B cell (primary cell): ENCODE measurements at regions of chr1 and their contacts with region 1.

Region 1: GRCh38 chr1:214328770-214329469 is 48.0 kb downstream of the SMYD2 start:
- DNase-seq: peak; percentile 78
- ATAC-seq: peak; percentile 87
- H3K4me3 ChIP-seq: no peak overlapping the region
- H3K4me3 Mint-ChIP-seq: no peak overlapping the region
- H3K27ac ChIP-seq: no peak overlapping the region
- H3K27ac Mint-ChIP-seq: peak overlapping the region; percentile 10
- H3K4me1 ChIP-seq: no peaks in the 10 kb centered on the region
- H3K4me1 Mint-ChIP-seq: peaks cover 16% of the 10 kb centered on the region
- H3K27me3 ChIP-seq: no peaks in the 10 kb centered on the region
- H3K27me3 Mint-ChIP-seq: no peaks in the 10 kb centered on the region
- CTCF ChIP-seq: peak; percentile 88

Region 2: GRCh38 chr1:213242883-213243282 is 1086.0 kb before region 1 on chr1:
- CTCF ChIA-PET with region 1: interaction called, 10 read pairs
- POLR2A ChIA-PET with region 1: no interaction called
- intact Hi-C with region 1: no loop called
- DNase-seq: no peak
- ATAC-seq: no peak
- H3K4me3 ChIP-seq: no peak overlapping the region
- H3K4me3 Mint-ChIP-seq: no peak overlapping the region
- H3K27ac ChIP-seq: no peak overlapping the region
- H3K27ac Mint-ChIP-seq: no peak overlapping the region
- H3K4me1 ChIP-seq: no peaks in the 10 kb centered on the region
- H3K4me1 Mint-ChIP-seq: no peaks in the 10 kb centered on the region
- H3K27me3 ChIP-seq: no peaks in the 10 kb centered on the region
- H3K27me3 Mint-ChIP-seq: no peaks in the 10 kb centered on the region
- CTCF ChIP-seq: no peak

Region 3: GRCh38 chr1:214271174-214271858 is 57.6 kb before region 1 on chr1:
- CTCF ChIA-PET with region 1: interaction called, 25 read pairs
- POLR2A ChIA-PET with region 1: no interaction called
- intact Hi-C with region 1: no loop called
- DNase-seq: no peak
- ATAC-seq: no peak
- H3K4me3 ChIP-seq: no peak overlapping the region
- H3K4me3 Mint-ChIP-seq: no peak overlapping the region
- H3K27ac ChIP-seq: no peak overlapping the region
- H3K27ac Mint-ChIP-seq: no peak overlapping the region
- H3K4me1 ChIP-seq: no peaks in the 10 kb centered on the region
- H3K4me1 Mint-ChIP-seq: no peaks in the 10 kb centered on the region
- H3K27me3 ChIP-seq: peaks cover 0 to 4% (median 0%) of the 10 kb centered on the region in 4 experiments
- H3K27me3 Mint-ChIP-seq: peaks cover 19% of the 10 kb centered on the region
- CTCF ChIP-seq: no peak

Region 4: GRCh38 chr1:214316593-214316992 is 12.3 kb before region 1 on chr1:
- CTCF ChIA-PET with region 1: interaction called, 48 read pairs
- POLR2A ChIA-PET with region 1: no interaction called
- intact Hi-C with region 1: no loop called
- DNase-seq: no peak
- ATAC-seq: no peak
- H3K4me3 ChIP-seq: no peak overlapping the region
- H3K4me3 Mint-ChIP-seq: no peak overlapping the region
- H3K27ac ChIP-seq: no peak overlapping the region
- H3K27ac Mint-ChIP-seq: no peak overlapping the region
- H3K4me1 ChIP-seq: no peaks in the 10 kb centered on the region
- H3K4me1 Mint-ChIP-seq: peaks cover 3% of the 10 kb centered on the region
- H3K27me3 ChIP-seq: no peaks in the 10 kb centered on the region
- H3K27me3 Mint-ChIP-seq: no peaks in the 10 kb centered on the region
- CTCF ChIP-seq: no peak

Region 5: GRCh38 chr1:214362188-214362882 is 33.4 kb after region 1 on chr1:
- CTCF ChIA-PET with region 1: no interaction called
- POLR2A ChIA-PET with region 1: no interaction called
- intact Hi-C with region 1: no loop called
- DNase-seq: no peak
- ATAC-seq: no peak
- H3K4me3 ChIP-seq: no peak overlapping the region
- H3K4me3 Mint-ChIP-seq: no peak overlapping the region
- H3K27ac ChIP-seq: no peak overlapping the region
- H3K27ac Mint-ChIP-seq: no peak overlapping the region
- H3K4me1 ChIP-seq: no peaks in the 10 kb centered on the region
- H3K4me1 Mint-ChIP-seq: no peaks in the 10 kb centered on the region
- H3K27me3 ChIP-seq: peaks cover 0 to 17% (median 0%) of the 10 kb centered on the region in 4 experiments
- H3K27me3 Mint-ChIP-seq: peaks cover 41% of the 10 kb centered on the region
- CTCF ChIP-seq: no peak

Region 6: DNA sequence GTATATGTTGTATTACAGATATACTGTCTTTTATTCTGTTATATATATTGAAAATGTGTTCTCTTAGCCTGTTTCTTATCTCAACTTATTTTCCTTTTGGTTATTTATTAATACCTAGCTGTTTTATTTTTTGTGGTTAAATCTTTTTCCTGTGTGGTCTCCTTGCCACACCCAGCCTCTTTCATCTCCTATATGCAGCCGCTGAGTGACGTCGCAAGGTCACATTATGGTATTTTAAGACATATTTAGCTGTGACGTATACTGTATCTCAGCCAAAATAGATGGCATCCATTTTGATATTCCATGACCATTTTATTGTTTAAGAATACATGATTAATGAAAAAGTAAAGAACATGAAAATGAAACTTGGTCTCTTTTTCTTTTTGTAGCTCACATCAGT is 303.2 kb after region 1 on chr1:
- CTCF ChIA-PET with region 1: interaction called, 23 read pairs
- POLR2A ChIA-PET with region 1: no interaction called
- intact Hi-C with region 1: loop called (anchors 5 kb)
- DNase-seq: peak; percentile 8
- ATAC-seq: no peak
- H3K4me3 ChIP-seq: no peak overlapping the region
- H3K4me3 Mint-ChIP-seq: no peak overlapping the region
- H3K27ac ChIP-seq: no peak overlapping the region
- H3K27ac Mint-ChIP-seq: no peak overlapping the region
- H3K4me1 ChIP-seq: no peaks in the 10 kb centered on the region
- H3K4me1 Mint-ChIP-seq: no peaks in the 10 kb centered on the region
- H3K27me3 ChIP-seq: no peaks in the 10 kb centered on the region
- H3K27me3 Mint-ChIP-seq: no peaks in the 10 kb centered on the region
- CTCF ChIP-seq: no peak